ENCODE measurements at regions of chr10 and their contacts with region 1.

Region 1: GRCh38 chr10:14093730-14094484 is 236.8 kb downstream of the FRMD4A start:
- DNase-seq: peak in 1 of 2 donors; percentile 56
- H3K4me3 ChIP-seq: no peak overlapping the region
- H3K27ac ChIP-seq: no peak overlapping the region
- H3K4me1 ChIP-seq: peaks cover 0 to 7% (median 1%) of the 10 kb centered on the region in 4 donors
- H3K27me3 ChIP-seq: no peaks in the 10 kb centered on the region
- CTCF ChIP-seq: peak in 2 of 7 experiments; percentile 9 to 22
- EP300 ChIP-seq: no peak
- POLR2A ChIP-seq: no peak

Region 2: DNA sequence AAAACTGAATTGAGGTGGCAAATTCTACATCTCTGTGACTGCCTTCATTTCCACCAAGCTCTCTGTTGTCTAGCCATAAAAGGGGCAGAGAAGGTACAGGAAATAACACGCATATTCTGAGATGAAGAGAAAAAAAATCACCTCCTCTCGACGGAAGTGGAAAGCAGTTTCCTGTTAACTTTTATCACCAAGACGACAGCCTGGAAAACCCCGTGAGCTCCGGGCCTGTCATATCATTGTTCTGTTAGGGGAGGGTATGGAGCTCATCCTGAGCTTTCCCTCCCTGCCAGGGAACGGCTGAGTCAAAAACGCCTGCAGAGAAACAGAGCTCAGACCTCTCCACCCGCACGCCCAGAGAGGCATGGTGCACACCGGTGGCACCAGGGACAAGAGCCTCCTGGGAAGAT is 306.9 kb before region 1 on chr10:
- intact Hi-C with region 1: loop called (anchors 5 kb)
- DNase-seq: peak in 1 of 2 donors; percentile 82
- H3K4me3 ChIP-seq: no peak overlapping the region
- H3K27ac ChIP-seq: peak overlapping the region in 4 of 5 donors; percentile 34 to 76 (median 56)
- H3K4me1 ChIP-seq: peaks cover 7 to 30% (median 18%) of the 10 kb centered on the region in 4 donors
- H3K27me3 ChIP-seq: no peaks in the 10 kb centered on the region
- CTCF ChIP-seq: no peak
- EP300 ChIP-seq: no peak
- POLR2A ChIP-seq: no peak